HEK293 (cell line): ENCODE measurements at regions of chr18 and their contacts with region 1.

Region 1: DNA sequence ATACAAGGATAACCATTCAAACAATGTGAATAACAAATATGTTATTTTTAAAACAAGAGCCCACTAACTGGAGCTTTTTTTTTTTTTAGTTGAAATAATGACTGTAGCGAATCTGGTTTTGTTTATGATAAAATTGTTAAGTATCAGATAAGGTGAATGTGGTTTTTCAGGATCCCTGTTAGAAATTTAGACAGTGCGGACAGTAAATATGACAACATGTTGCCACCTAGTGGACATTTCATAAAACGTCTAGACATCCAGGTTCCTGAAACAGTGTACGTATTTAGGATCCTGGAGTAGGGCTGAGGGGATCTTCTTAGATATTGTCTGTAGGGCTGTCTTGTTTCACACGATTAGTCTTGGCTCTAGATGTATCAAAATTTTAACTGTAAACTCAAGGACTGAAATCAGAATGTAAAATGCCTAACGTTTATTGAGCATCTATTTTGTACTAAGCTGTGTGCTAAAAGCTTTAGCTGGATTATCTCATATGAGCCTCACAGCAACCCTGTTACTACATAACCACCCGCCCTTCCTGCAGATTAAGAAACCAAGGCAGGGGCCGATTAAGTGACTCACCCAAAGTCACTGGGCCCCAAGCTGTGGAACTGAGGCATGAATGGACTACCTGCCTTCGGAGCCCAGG is 23.9 kb upstream of the CCDC68 start:
- H3K4me3 ChIP-seq: no peak overlapping the region
- H3K27ac ChIP-seq: no peak overlapping the region
- H3K4me1 ChIP-seq: peaks cover 3% of the 10 kb centered on the region; the same call in 1 of the 2 replicates
- CTCF ChIP-seq: peak; percentile 45; the same call in 1 of the 2 replicates

Region 2: DNA sequence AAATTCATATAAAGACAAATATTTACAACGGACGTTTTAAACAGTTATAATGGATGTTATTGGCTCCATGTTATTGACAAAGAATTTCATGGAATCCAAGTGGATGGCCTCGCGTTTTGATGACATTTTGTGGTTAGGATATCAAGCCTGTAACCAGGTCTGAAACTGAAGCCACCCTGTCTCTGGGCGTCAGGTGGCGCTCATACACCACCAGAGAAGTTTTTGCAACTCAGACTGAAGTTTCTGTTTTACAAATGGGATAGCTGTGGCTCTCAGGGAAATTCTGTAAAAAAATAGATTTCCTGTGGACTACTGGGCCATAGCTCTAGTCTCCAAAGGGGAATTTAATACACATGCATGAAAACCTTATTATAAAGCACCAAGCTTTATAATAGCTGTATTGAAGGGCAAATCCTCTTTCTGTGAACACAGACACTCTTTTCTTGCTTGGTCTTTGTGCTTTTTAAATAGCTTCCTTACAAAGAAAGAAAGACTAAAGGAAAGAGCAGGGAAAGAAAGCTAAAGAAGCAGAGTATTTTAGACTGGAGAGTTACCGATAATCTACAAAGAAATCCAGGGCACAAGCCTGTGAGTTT is 538.7 kb before region 1 on chr18:
- CTCF ChIA-PET with region 1: interaction called, 10 read pairs
- POLR2A ChIA-PET with region 1: no interaction called
- H3K4me3 ChIP-seq: no peak overlapping the region
- H3K27ac ChIP-seq: no peak overlapping the region
- H3K4me1 ChIP-seq: no peaks in the 10 kb centered on the region
- CTCF ChIP-seq: peak; percentile 41; the same call in 1 of the 2 replicates

Region 3: GRCh38 chr18:54679318-54680149 is 303.6 kb before region 1 on chr18:
- CTCF ChIA-PET with region 1: interaction called, 33 read pairs
- POLR2A ChIA-PET with region 1: no interaction called
- H3K4me3 ChIP-seq: no peak overlapping the region
- H3K27ac ChIP-seq: no peak overlapping the region
- H3K4me1 ChIP-seq: no peaks in the 10 kb centered on the region; the same call in 1 of the 2 replicates
- CTCF ChIP-seq: peak; percentile 54; the same call in 1 of the 2 replicates

Region 4: DNA sequence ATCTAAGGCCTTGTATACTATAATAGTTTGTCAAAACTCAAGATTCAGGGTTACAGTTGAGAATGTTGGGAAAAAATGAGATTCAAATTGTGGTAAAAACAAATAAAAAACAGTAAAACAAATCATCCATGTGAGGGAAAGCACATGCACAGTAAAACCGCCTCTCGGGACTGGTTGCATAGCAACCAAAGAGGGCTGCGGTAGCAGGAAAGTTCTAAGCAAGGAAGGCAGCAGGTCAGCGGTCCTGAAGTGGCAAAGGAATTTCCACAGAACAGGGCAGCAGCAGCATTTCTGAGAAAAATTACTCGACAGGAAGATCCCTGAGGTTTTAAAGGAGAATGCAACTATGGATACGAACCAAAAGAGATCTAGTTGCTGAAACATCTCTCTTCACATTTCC is 298.4 kb before region 1 on chr18:
- CTCF ChIA-PET with region 1: interaction called, 33 read pairs
- POLR2A ChIA-PET with region 1: no interaction called
- H3K4me3 ChIP-seq: no peak overlapping the region
- H3K27ac ChIP-seq: no peak overlapping the region
- H3K4me1 ChIP-seq: no peaks in the 10 kb centered on the region
- CTCF ChIP-seq: no peak

Region 5: DNA sequence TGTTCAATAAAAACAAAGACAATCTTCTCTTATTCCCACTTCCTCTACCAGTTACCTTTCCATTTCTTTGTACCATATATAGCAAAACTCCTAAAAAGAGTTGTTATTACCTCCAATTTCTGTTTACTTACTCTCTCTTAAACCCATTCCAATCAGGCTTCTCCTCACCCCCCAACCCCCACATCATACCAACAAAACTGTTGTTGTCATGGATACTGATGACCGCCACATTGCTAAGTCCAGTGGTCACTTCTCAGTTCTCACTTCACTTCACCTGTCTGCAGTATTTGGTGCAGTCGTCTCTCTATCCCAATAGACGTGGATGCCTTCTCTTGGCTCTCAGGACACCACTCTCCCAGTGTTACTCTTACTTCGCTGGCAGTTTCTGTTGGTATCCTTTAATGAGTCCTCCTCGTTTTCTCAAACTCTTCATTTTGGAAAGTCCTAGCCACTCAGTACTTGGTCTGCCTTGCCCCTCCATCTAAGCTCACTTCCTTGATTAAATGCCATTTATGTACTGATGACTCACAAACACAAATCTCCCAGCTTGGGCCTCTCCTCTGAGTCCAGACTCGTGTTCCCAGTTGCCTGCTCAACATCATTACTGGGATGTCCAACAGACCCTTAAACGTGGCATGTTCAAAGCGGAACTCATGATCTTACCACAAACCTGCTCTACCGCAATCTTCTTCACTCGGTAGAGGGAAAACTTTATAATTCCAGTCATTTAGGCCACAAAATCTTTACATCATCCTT is 10.3 kb before region 1 on chr18:
- CTCF ChIA-PET with region 1: interaction called, 23 read pairs
- POLR2A ChIA-PET with region 1: no interaction called
- H3K4me3 ChIP-seq: no peak overlapping the region
- H3K27ac ChIP-seq: no peak overlapping the region
- H3K4me1 ChIP-seq: no peaks in the 10 kb centered on the region
- CTCF ChIP-seq: no peak